ENCODE measurements at regions of chr13 and their contacts with region 1.

Region 1: DNA sequence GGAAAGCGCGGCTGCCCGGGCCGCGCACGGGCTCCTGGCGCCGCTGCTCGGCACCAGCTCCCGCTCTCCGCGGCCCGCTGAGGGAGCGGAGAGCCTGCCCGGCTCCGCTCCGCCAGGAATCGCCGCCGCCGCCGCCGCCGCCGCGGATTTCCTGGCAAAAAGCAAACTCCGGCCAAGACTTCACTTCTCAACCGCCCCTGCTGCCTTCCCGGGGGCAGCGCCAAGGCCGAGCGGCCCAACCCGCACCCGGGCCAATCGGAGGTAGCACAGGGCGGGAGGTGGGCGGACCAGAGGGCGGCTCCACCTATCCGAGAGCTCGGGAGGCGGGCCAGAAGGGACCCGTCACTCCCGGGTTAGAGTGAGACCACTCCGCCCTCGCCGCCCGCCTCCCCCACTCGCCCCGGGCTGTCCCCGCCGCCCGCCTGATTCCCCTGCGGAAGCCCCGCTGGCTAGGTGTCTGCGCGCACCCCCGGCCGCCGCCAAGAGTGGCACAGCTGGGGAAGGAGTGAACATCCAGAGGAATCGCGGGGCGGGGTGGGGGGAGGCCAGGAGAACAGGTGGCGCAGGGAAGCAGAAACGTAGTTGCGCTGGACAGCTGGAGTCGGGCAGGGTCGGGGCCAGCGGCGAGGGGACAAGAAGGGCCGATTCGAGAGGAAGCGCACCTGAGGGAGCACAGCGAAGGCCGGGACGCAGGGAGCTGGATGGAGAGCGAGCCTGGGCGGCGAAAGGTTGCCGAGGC is at the start of gene LNX2:
- DNase-seq: peak; percentile 94 to 98 (median 95)
- ATAC-seq: peak; percentile 92
- H3K4me3 ChIP-seq: peak within 1 kb of the TSS; percentile 95
- H3K4me3 Mint-ChIP-seq: peak within 1 kb of the TSS; percentile 90 to 96 (median 95)
- H3K27ac ChIP-seq: peak within 1 kb of the TSS; percentile 97
- H3K27ac Mint-ChIP-seq: peak within 1 kb of the TSS; percentile 87 to 98 (median 97)
- H3K4me1 ChIP-seq: peaks cover 32 to 33% of the 10 kb centered on the region in 2 donors
- H3K4me1 Mint-ChIP-seq: peaks cover 40 to 69% (median 63%) of the 10 kb centered on the region in 7 donors
- H3K27me3 ChIP-seq: no peaks in the 10 kb centered on the region
- H3K27me3 Mint-ChIP-seq: no peaks in the 10 kb centered on the region
- total RNA-seq, gene LNX2: 3.2 to 10.7 (median 7.1) TPM

Region 2: DNA sequence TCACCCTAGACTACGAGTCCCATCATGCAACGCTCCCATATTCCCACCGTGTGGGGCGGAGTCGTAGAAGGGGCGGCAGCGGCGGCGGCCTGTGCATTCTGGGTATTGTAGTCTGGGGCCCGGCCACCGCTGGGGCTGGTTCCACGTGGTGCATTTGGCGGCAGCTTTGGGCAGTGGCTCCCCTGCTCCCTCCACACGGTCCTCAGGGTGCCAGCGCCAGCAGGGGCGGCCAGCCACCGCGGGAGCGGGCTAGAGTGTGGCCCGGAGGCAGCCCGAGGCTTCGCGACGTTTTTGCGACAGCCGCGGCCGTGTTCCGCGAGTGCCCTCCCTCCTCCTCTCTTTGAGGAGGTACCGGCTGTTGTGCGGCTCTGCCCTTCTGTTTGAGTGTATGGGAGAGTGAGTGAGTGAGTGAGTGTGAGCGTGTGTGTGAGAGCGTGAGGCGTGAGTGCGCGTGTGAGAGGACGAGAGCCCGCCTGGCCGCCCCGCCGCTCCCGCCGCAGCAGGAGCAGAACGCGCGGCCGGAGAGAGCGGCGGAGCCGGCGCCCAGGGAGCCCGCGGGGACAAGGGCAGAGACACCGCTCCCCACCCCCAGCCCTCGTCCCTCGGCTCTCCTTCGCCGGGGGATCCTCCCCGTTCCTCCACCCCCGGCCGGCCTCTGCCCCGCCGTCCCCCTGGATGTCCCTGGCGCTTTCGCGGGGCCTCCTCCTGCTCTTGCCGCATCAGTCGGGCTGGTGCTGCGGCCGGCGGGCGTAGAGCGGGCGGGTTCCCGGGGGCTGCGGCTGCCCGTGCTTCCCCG is 1366.6 kb before region 1 on chr13 and contains the start of gene CDK8:
- CTCF ChIA-PET with region 1: no interaction called
- POLR2A ChIA-PET with region 1: no interaction called
- intact Hi-C with region 1: loop called in 1 of 2 experiments (anchors 1 kb)
- DNase-seq: peak; percentile 83 to 95 (median 93)
- ATAC-seq: peak; percentile 92
- H3K4me3 ChIP-seq: peak within 1 kb of the TSS; percentile 95
- H3K4me3 Mint-ChIP-seq: peak within 1 kb of the TSS; percentile 83 to 98 (median 94)
- H3K27ac ChIP-seq: peak within 1 kb of the TSS; percentile 85
- H3K27ac Mint-ChIP-seq: peak within 1 kb of the TSS; percentile 82 to 93 (median 90)
- H3K4me1 ChIP-seq: peaks cover 17% of the 10 kb centered on the region in 2 donors
- H3K4me1 Mint-ChIP-seq: peaks cover 25 to 50% (median 41%) of the 10 kb centered on the region in 7 donors
- H3K27me3 ChIP-seq: no peaks in the 10 kb centered on the region
- H3K27me3 Mint-ChIP-seq: peaks cover 0 to 2% (median 0%) of the 10 kb centered on the region in 5 donors
- total RNA-seq, gene CDK8: 9.0 to 14.0 (median 11.6) TPM

Region 3: DNA sequence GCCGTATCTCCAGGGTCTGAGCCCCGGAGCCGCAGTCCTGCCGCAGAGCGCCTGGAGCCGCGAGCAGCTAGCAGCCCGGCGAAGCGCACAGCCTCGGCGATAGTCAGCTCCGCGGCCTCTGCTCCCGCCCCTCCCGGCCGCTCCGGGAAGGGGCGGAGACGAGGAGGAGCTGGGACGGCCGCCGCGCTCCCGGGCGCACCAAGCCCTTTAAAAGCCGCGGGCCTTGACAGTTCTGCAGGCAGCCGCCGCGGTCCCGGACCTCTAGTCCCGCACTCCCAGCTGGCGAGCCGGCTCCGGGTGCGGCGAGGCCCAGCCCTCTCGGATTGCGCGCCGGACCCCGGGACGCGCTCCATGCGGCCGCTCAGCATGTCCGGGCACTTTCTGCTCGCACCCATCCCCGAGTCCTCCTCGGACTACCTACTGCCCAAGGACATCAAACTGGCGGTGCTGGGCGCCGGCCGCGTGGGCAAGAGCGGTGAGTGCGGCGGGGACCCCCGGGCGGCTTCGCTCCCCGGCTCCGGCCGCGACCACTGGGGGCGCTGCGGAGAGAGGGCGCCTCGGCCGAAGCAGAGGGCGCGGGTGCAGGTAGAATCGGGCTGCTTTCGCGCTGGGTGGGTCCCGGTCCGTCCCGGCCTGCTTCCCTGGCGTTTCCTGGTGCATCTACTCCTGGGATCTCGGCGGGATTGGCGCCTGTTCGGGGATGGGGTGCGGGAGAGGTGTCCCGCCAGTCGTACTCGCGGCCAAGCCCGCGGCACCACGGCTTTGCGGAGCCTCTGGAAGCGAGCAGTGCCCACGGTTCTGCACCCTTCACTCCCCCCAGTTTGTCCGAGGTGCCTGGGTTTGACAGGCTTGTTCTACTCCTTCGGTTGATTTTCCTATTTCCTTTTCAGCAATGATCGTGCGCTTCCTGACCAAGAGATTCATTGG is 349.7 kb before region 1 on chr13 and contains the start of gene RASL11A:
- CTCF ChIA-PET with region 1: no interaction called
- POLR2A ChIA-PET with region 1: no interaction called
- intact Hi-C with region 1: loop called in 1 of 2 experiments (anchors 2 kb)
- DNase-seq: peak; percentile 53 to 87 (median 76)
- ATAC-seq: peak; percentile 92
- H3K4me3 ChIP-seq: peak within 1 kb of the TSS; percentile 90
- H3K4me3 Mint-ChIP-seq: peak within 1 kb of the TSS; percentile 88 to 96 (median 92)
- H3K27ac ChIP-seq: peak within 1 kb of the TSS; percentile 75
- H3K27ac Mint-ChIP-seq: peak within 1 kb of the TSS; percentile 29 to 82 (median 75)
- H3K4me1 ChIP-seq: peaks cover 0 to 4% of the 10 kb centered on the region in 2 donors
- H3K4me1 Mint-ChIP-seq: peaks cover 9 to 35% (median 19%) of the 10 kb centered on the region in 7 donors
- H3K27me3 ChIP-seq: peaks cover 0 to 3% of the 10 kb centered on the region in 2 donors
- H3K27me3 Mint-ChIP-seq: peaks cover 0 to 45% (median 9%) of the 10 kb centered on the region in 5 donors
- total RNA-seq, gene RASL11A: 0.44 to 3.0 (median 0.86) TPM

Region 4: DNA sequence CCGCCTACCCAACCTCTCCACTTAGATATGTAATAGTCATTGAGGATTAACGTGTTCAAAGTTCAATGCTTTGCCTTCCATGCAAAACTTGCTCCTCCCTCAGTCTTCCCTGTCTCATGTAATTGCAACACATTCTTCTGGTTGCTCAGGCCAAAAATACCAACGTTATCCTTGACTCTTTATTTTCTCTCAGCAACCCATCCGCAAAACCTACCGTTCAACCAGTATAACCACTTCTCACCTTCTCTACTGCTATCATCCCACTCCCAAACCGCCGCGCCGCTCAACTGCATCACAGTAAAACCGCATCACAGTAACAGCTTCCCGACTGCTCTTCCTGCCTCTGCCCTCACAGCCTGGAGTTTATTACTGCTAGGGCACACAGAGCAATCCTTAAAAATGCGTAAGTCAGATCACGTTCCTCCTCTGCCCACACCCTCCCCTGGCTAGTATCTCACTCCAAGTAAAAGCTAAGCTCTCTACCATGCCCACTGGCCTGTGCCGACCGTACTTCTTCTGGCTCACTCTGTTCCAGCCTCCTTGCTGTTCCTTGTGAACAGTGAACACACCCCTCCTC is 178.4 kb before region 1 on chr13:
- CTCF ChIA-PET with region 1: interaction called, 3 read pairs
- POLR2A ChIA-PET with region 1: interaction called, 11 read pairs
- intact Hi-C with region 1: no loop called
- DNase-seq: peak in 6 of 9 donors; percentile 36 to 56 (median 43)
- ATAC-seq: peak; percentile 67
- H3K4me3 ChIP-seq: peak overlapping the region; percentile 27
- H3K4me3 Mint-ChIP-seq: peak overlapping the region; percentile 64 to 83 (median 76)
- H3K27ac ChIP-seq: peak overlapping the region; percentile 53
- H3K27ac Mint-ChIP-seq: peak overlapping the region; percentile 47 to 97 (median 90)
- H3K4me1 ChIP-seq: peaks cover 41 to 54% of the 10 kb centered on the region in 2 donors
- H3K4me1 Mint-ChIP-seq: peaks cover 46 to 84% (median 77%) of the 10 kb centered on the region in 7 donors
- H3K27me3 ChIP-seq: no peaks in the 10 kb centered on the region
- H3K27me3 Mint-ChIP-seq: no peaks in the 10 kb centered on the region

Region 5: DNA sequence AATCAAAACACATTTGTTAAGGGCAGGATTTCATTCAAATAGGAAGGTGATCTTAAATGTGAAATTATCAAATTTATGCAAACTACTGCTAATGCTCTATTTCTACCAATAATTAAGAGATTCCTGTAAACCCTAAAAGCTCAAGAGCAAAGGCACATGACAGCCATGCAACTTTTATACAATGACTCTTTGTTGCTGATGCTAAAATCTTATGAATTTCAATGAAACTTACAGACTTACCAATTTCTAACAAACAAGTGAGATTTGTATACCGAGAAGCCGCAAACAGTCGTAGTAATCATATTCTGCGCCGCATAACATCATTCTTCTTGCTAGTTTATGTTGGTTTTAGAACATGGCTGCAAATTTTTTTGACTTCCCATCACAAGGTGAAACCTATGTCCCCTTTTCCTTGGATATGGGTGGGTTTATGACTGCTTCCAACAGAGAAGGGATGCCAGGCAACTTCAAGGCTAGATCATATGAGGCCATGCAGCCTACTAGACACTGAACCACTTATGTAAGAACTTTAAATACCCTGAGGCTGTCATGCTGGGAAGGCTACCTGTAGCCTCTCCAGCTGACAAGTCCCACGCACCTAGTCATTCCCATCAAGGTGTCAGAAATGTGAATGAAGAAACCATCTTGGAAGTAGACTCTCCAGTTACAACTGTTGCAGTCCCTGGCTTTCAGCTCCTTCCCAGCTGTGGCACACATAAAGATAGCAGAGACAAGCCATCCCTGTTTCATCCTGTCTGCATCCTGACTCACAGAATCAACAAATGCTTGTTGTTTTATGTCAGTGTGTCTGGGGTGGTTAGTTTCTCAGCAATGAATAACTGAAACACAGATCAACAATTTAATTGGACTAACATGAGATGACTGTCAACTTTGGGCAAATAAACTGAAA is 42.2 kb before region 1 on chr13:
- CTCF ChIA-PET with region 1: no interaction called
- POLR2A ChIA-PET with region 1: no interaction called
- intact Hi-C with region 1: loop called (anchors 5 kb)
- DNase-seq: no peak
- ATAC-seq: no peak
- H3K4me3 ChIP-seq: no peak overlapping the region
- H3K4me3 Mint-ChIP-seq: no peak overlapping the region
- H3K27ac ChIP-seq: no peak overlapping the region
- H3K27ac Mint-ChIP-seq: peak overlapping the region in 1 of 9 donors; percentile 29
- H3K4me1 ChIP-seq: peaks cover 0 to 2% of the 10 kb centered on the region in 2 donors
- H3K4me1 Mint-ChIP-seq: peaks cover 9 to 36% (median 24%) of the 10 kb centered on the region in 7 donors
- H3K27me3 ChIP-seq: no peaks in the 10 kb centered on the region
- H3K27me3 Mint-ChIP-seq: no peaks in the 10 kb centered on the region

Region 6: DNA sequence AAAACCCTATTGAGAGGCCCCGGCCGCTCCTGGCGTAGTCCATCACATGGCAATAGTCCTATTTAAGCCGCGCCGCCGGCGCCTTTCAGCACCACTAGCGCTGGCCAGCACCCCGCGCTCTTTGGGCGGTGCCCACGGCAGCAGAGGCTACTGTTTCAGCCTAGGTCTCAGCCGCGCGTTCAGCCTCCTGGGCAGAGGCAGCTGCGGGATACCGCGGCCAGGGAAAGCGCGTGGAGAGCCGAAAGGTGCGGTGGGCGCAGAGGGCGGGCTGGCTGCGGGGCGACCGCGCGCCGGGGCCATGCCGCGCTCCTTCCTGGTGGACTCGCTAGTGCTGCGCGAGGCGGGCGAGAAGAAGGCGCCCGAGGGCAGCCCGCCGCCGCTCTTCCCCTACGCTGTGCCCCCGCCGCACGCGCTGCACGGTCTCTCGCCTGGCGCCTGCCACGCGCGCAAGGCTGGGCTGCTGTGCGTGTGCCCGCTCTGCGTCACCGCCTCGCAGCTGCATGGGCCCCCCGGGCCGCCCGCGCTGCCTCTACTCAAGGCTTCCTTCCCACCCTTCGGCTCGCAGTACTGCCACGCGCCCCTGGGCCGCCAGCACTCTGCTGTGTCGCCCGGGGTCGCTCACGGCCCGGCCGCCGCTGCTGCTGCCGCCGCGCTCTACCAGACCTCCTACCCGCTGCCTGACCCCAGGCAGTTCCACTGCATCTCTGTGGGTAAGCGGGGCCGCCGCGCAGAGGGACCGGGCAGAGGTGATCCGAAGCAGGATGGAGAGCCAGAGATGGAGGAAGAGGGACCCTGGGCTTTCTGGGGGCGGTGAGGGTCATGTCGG is 172.1 kb after region 1 on chr13 and contains the start of gene GSX1:
- CTCF ChIA-PET with region 1: no interaction called
- POLR2A ChIA-PET with region 1: no interaction called
- intact Hi-C with region 1: loop called in 1 of 2 experiments (anchors 5 kb)
- DNase-seq: peak in 7 of 9 donors; percentile 33 to 55 (median 41)
- ATAC-seq: peak; percentile 75
- H3K4me3 ChIP-seq: peak within 1 kb of the TSS; percentile 59
- H3K4me3 Mint-ChIP-seq: peak within 1 kb of the TSS; percentile 74 to 92 (median 87)
- H3K27ac ChIP-seq: no peak within 1 kb of the TSS
- H3K27ac Mint-ChIP-seq: peak within 1 kb of the TSS in 2 of 9 donors; percentile 48 to 58
- H3K4me1 ChIP-seq: peaks cover 17 to 18% of the 10 kb centered on the region in 2 donors
- H3K4me1 Mint-ChIP-seq: peaks cover 28 to 59% (median 44%) of the 10 kb centered on the region in 7 donors
- H3K27me3 ChIP-seq: peaks cover 10 to 29% of the 10 kb centered on the region in 2 donors
- H3K27me3 Mint-ChIP-seq: peaks cover 75 to 89% (median 83%) of the 10 kb centered on the region in 5 donors
- total RNA-seq, gene GSX1: not detected

Region 7: GRCh38 chr13:28718543-28719226 is 1098.1 kb after region 1 on chr13 and contains the start of gene SLC46A3:
- CTCF ChIA-PET with region 1: no interaction called
- POLR2A ChIA-PET with region 1: no interaction called
- intact Hi-C with region 1: loop called in 1 of 2 experiments (anchors 2 kb)
- DNase-seq: peak; percentile 94 to 97 (median 96)
- ATAC-seq: peak; percentile 99
- H3K4me3 ChIP-seq: peak within 1 kb of the TSS; percentile 81
- H3K4me3 Mint-ChIP-seq: peak within 1 kb of the TSS; percentile 89 to 97 (median 95)
- H3K27ac ChIP-seq: peak within 1 kb of the TSS; percentile 78
- H3K27ac Mint-ChIP-seq: peak within 1 kb of the TSS; percentile 90 to 97 (median 95)
- H3K4me1 ChIP-seq: peaks cover 11 to 14% of the 10 kb centered on the region in 2 donors
- H3K4me1 Mint-ChIP-seq: peaks cover 27 to 48% (median 38%) of the 10 kb centered on the region in 7 donors
- H3K27me3 ChIP-seq: no peaks in the 10 kb centered on the region
- H3K27me3 Mint-ChIP-seq: peaks cover 0 to 10% (median 0%) of the 10 kb centered on the region in 5 donors
- total RNA-seq, gene SLC46A3: 11.1 to 23.6 (median 12.0) TPM

Measured in naive thymus-derived CD4-positive, alpha-beta T cell (primary cell).